MCF 10A (cell line): ENCODE measurements at regions of chr12 and their contacts with region 1.

Region 1: DNA sequence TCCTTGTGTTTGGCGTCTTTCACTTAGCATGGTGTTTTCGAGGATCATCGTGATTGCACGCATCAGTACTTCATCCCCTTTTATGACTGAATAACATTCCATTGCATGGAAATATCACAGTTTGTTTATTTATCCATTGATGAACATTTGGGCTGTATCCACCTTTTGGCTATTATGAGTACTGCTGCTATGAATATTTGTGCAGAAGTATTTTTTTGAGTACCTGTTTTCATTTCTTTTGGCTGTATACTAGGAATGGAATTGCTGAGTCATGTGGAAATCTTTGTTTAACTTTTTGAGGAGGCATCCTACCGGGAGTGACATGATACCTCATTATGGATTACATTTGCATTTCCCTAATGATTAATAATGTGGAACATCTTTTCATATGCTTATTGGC is 66.4 kb downstream of the WNK1 start:
- DNase-seq: peak; percentile 16
- H3K4me3 Mint-ChIP-seq: no peak overlapping the region
- H3K27ac Mint-ChIP-seq: peak overlapping the region; percentile 83
- H3K4me1 Mint-ChIP-seq: peaks cover 28% of the 10 kb centered on the region
- H3K27me3 Mint-ChIP-seq: no peaks in the 10 kb centered on the region
- CTCF ChIP-seq: no peak

Region 2: DNA sequence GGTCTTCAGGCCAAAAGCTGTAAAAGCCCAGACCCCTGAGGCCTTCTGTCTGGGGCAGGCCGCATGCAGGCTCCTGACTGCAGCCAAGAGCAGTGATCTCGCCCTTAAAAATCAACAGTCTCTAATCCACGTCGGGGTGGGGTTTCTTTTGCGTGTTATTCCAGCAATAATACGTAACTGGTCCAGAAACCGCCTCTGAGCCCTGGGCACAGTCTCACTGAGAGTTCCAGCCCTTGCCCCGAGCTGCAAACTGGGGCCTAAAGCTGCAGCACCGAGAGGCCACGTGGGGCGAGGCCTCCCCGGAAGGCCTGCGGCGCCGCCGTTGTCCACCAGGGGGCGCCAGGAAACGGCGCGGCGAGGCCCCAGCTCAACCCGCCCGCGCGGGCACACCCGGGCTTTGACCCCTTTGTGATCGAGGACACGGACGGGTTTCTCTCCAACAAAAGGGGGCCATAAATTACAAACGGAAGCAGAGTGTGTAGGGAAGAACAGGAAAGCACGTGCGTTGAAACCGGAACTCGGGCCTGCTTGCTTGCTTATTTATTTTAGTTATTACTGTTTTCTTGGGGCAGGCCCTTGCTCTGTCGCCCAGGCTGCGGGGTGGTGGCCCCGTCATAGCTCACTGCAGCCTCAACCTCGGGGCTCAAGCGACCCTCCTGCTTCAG is 242.7 kb before region 1 on chr12:
- CTCF ChIA-PET with region 1: interaction called, 74 read pairs
- POLR2A ChIA-PET with region 1: interaction called, 53 read pairs
- intact Hi-C with region 1: loop called (anchors 1 kb)
- DNase-seq: peak; percentile 78
- H3K4me3 Mint-ChIP-seq: peak overlapping the region; percentile 35
- H3K27ac Mint-ChIP-seq: peak overlapping the region; percentile 91
- H3K4me1 Mint-ChIP-seq: peaks cover 44% of the 10 kb centered on the region
- H3K27me3 Mint-ChIP-seq: no peaks in the 10 kb centered on the region
- CTCF ChIP-seq: peak; percentile 99

Region 3: GRCh38 chr12:666766-667308 is 151.9 kb before region 1 on chr12:
- CTCF ChIA-PET with region 1: no interaction called
- POLR2A ChIA-PET with region 1: no interaction called
- intact Hi-C with region 1: no loop called
- DNase-seq: peak; percentile 20
- H3K4me3 Mint-ChIP-seq: no peak overlapping the region
- H3K27ac Mint-ChIP-seq: peak overlapping the region; percentile 10
- H3K4me1 Mint-ChIP-seq: peaks cover 8% of the 10 kb centered on the region
- H3K27me3 Mint-ChIP-seq: no peaks in the 10 kb centered on the region
- CTCF ChIP-seq: no peak

Region 4: GRCh38 chr12:835754-836518 is 17.2 kb after region 1 on chr12:
- CTCF ChIA-PET with region 1: interaction called, 12 read pairs
- POLR2A ChIA-PET with region 1: interaction called, 14 read pairs
- intact Hi-C with region 1: no loop called
- DNase-seq: peak; percentile 54
- H3K4me3 Mint-ChIP-seq: no peak overlapping the region
- H3K27ac Mint-ChIP-seq: no peak overlapping the region
- H3K4me1 Mint-ChIP-seq: peaks cover 17% of the 10 kb centered on the region
- H3K27me3 Mint-ChIP-seq: no peaks in the 10 kb centered on the region
- CTCF ChIP-seq: no peak

Region 5: GRCh38 chr12:851913-852312 is 33.2 kb after region 1 on chr12:
- CTCF ChIA-PET with region 1: interaction called, 45 read pairs
- POLR2A ChIA-PET with region 1: interaction called, 43 read pairs
- intact Hi-C with region 1: loop called (anchors 1 kb)
- DNase-seq: peak; percentile 76
- H3K4me3 Mint-ChIP-seq: peak overlapping the region; percentile 63
- H3K27ac Mint-ChIP-seq: peak overlapping the region; percentile 80
- H3K4me1 Mint-ChIP-seq: peaks cover 44% of the 10 kb centered on the region
- H3K27me3 Mint-ChIP-seq: no peaks in the 10 kb centered on the region
- CTCF ChIP-seq: no peak

Region 6: DNA sequence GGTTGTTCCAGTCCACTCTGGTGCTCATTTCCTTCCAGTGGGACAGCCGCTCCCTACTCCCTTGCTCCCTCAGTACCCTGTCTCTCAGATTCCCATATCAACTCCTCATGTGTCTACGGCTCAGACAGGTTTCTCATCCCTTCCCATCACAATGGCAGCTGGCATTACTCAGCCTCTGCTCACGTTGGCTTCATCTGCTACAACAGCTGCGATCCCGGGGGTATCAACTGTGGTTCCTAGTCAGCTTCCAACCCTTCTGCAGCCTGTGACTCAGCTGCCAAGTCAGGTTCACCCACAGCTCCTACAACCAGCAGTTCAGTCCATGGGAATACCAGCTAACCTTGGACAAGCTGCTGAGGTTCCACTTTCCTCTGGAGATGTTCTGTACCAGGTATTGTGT is 60.9 kb after region 1 on chr12:
- CTCF ChIA-PET with region 1: interaction called, 8 read pairs
- POLR2A ChIA-PET with region 1: no interaction called
- intact Hi-C with region 1: loop called (anchors 5 kb)
- DNase-seq: peak; percentile 27
- H3K4me3 Mint-ChIP-seq: no peak overlapping the region
- H3K27ac Mint-ChIP-seq: peak overlapping the region; percentile 17
- H3K4me1 Mint-ChIP-seq: peaks cover 10% of the 10 kb centered on the region
- H3K27me3 Mint-ChIP-seq: no peaks in the 10 kb centered on the region
- CTCF ChIP-seq: no peak

Region 7: GRCh38 chr12:949453-950191 is 130.9 kb after region 1 on chr12 and contains the start of gene RAD52:
- CTCF ChIA-PET with region 1: interaction called, 17 read pairs
- POLR2A ChIA-PET with region 1: interaction called, 22 read pairs
- intact Hi-C with region 1: loop called (anchors 1 kb)
- DNase-seq: peak; percentile 98
- H3K4me3 Mint-ChIP-seq: peak within 1 kb of the TSS; percentile 96
- H3K27ac Mint-ChIP-seq: peak within 1 kb of the TSS; percentile 86
- H3K4me1 Mint-ChIP-seq: peaks cover 26% of the 10 kb centered on the region
- H3K27me3 Mint-ChIP-seq: no peaks in the 10 kb centered on the region
- CTCF ChIP-seq: peak; percentile 92
- total RNA-seq, gene RAD52: 26.0 and 27.9 TPM in 2 replicates

Region 8: DNA sequence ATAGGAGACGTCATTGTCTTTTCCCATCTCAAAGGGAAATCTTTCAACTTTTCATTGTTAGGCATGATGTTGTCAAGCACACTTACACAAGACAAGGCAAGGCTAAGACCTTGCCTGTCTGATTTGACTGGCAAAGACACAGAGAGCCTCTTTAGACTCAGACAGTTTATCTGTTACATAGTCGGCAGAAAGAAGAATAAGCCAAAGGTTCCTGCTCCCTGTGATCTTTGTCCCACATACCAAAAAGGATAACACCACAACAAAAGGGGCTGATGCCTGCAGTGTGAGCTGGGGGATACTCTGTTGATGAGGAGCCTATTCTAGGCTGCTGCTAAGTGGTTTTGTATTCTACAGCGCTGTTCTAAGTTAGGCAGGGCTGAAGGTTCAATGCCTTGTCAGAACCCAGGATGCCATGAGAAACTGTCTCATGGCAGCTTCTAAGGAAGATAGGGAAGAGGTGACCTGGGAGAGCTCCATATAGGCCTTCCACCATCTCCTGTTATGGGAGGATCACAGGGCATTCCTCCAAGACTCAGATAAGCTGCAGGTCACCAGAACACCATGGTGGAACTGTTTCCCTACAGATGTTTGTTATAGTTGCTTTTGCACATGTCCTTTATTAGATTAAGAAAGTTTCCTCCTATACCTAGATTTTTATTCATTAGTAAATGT is 185.0 kb after region 1 on chr12:
- CTCF ChIA-PET with region 1: no interaction called
- POLR2A ChIA-PET with region 1: no interaction called
- intact Hi-C with region 1: no loop called
- DNase-seq: no peak
- H3K4me3 Mint-ChIP-seq: no peak overlapping the region
- H3K27ac Mint-ChIP-seq: no peak overlapping the region
- H3K4me1 Mint-ChIP-seq: peaks cover 10% of the 10 kb centered on the region
- H3K27me3 Mint-ChIP-seq: no peaks in the 10 kb centered on the region
- CTCF ChIP-seq: no peak